CD8-positive, alpha-beta memory T cell (primary cell): ENCODE measurements at regions of chr3 and their contacts with region 1.

Region 1: GRCh38 chr3:42847731-42848130 is 27.9 kb downstream of the CYP8B1 start:
- DNase-seq: no peak
- H3K4me3 ChIP-seq: no peak overlapping the region
- H3K4me3 Mint-ChIP-seq: no peak overlapping the region
- H3K27ac ChIP-seq: no peak overlapping the region
- H3K27ac Mint-ChIP-seq: peak overlapping the region in 1 of 8 donors; percentile 49
- H3K4me1 ChIP-seq: peaks cover 9% of the 10 kb centered on the region
- H3K4me1 Mint-ChIP-seq: peaks cover 9 to 15% (median 14%) of the 10 kb centered on the region in 3 donors
- H3K27me3 ChIP-seq: no peaks in the 10 kb centered on the region
- H3K27me3 Mint-ChIP-seq: peaks cover 0 to 2% of the 10 kb centered on the region in 2 donors

Region 2: DNA sequence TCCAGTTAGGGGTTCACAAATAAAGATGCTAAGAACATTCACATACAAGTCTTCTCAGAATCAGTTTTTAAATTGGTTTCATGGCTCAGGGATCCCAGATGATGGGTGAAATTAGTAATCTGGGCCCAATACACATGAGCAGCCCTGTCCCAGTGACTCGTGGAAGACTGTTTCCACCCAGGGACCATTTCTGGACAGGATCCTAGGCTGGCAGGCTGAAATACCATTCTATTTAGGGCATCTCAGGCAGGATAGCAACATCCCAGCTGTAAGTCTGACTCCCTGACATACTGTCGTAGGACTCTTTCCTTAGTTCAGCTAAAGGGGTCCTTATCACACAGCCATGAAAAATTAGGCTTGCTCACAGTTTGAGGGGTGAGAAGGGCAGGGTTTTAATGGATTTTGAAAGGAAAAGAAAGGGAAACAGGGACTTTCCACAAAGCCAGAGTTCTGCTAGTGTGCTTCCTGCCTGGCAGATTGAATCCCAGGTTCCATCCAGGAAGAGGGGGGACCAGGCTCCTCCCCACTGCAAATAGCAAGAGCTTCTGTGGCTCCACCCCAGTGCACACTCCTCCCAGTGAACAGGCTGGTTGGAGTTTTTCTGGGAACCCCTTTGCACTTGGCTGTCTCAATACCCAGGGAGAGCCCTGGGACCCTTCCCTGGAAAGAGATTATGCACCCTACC is 396.0 kb before region 1 on chr3:
- CTCF ChIA-PET with region 1: no interaction called
- POLR2A ChIA-PET with region 1: no interaction called
- DNase-seq: no peak
- H3K4me3 ChIP-seq: no peak overlapping the region
- H3K4me3 Mint-ChIP-seq: no peak overlapping the region
- H3K27ac ChIP-seq: no peak overlapping the region
- H3K27ac Mint-ChIP-seq: no peak overlapping the region
- H3K4me1 ChIP-seq: no peaks in the 10 kb centered on the region
- H3K4me1 Mint-ChIP-seq: no peaks in the 10 kb centered on the region
- H3K27me3 ChIP-seq: no peaks in the 10 kb centered on the region
- H3K27me3 Mint-ChIP-seq: peaks cover 9 to 11% of the 10 kb centered on the region in 2 donors

Region 3: GRCh38 chr3:42795621-42796181 is 52.0 kb before region 1 on chr3:
- CTCF ChIA-PET with region 1: no interaction called
- POLR2A ChIA-PET with region 1: interaction called, 16 read pairs
- DNase-seq: no peak
- H3K4me3 ChIP-seq: no peak overlapping the region
- H3K4me3 Mint-ChIP-seq: no peak overlapping the region
- H3K27ac ChIP-seq: no peak overlapping the region
- H3K27ac Mint-ChIP-seq: peak overlapping the region in 1 of 8 donors; percentile 38
- H3K4me1 ChIP-seq: peaks cover 8% of the 10 kb centered on the region
- H3K4me1 Mint-ChIP-seq: peaks cover 18 to 38% (median 34%) of the 10 kb centered on the region in 3 donors
- H3K27me3 ChIP-seq: no peaks in the 10 kb centered on the region
- H3K27me3 Mint-ChIP-seq: no peaks in the 10 kb centered on the region